ENCODE measurements at regions of chr17 and their contacts with region 1.

Region 1: DNA sequence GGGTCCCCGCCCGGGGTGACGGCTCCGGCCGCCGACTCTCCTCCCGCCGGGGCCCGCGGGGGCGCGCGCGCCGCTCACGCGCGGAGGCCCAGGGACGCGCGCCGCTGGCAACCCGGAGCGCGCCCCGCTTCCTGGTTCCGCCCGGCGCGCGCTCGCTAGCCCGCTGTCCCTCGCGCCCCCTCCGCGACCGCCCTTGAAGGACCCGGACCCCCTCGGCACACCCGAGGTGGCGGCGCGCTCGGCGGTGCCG is at the start of gene STAT5B:
- DNase-seq: peak in 8 of 10 donors; percentile 46 to 95 (median 70)

Region 2: DNA sequence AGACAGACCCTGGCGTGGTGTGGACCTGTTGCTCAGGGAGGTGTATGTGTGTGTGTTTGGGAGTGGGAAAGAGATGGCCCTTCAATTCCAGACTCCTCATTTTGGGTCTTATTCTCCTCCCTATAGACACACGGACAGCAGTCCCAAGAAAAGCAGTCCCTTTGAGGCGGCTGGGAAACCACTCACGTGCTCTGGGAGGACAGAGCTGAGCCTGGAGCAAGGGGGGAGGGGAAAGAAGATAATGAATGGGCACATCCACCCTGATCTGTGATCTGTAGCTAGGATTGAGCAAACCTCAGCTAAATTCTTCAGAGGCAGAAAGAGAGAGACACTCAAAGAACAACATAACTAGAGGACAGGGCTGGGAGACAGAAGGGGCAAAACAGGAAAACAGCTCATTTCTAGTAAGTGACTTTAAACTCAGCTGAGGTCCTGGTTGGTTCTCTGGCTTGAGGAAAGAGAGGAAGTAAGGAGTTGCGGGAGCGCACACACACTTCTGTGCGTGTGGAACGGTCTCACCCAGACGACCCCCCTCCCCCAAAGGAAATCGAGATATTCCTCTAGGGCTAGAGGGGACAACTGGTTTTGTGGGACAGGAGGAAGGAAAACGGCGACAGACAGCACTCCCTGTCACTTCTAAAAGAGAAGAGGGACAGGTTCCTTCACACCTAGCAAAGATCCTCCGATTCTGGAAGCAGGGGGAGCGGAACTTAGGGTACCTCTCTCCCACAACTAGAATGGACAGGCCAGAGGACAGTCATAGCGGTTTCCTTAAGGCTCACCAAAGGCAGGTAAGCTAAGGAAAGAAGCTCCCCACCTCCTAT is 122.2 kb before region 1 on chr17:
- intact Hi-C with region 1: no loop called
- DNase-seq: peak in 1 of 10 donors; percentile 6

Region 3: GRCh38 chr17:42183741-42184711 is 92.3 kb before region 1 on chr17:
- intact Hi-C with region 1: loop called (anchors 5 kb)
- DNase-seq: peak; percentile 48 to 97 (median 70)

Region 4: DNA sequence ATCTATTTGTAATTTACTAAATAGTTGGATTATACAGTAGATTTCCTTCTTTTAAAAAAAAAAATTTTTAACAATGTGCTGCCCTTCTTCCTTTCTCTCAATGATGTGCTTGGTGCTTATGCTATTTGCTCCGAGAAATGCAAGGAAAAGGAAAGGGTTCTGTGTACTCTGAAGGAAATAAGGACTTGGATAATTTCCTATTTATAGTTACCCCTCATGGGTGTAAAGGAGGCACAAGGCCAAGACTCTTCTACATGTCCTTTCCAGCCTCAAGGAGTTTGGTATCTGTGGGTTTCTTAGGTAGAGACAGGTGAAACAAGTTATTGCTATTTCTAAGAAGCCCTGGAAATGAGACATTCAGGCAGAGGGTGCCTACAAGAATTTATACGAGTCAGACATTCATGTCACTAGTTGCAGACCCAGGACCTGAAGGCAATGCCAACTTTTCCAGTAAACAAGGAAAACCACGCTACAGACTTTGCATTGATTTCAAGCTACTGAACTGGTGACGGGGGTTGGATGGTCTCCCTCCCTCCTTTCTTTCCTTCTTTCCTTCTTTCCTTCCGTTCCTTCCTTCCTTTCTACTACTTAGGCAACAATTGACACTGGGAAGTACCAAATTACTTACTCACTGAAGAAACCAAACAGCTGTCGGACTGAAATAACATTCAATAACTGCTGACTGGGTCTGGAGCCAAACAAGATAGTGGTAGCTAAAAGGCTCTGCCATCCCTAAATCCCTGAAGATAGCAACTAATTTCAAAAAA is 48.3 kb before region 1 on chr17:
- intact Hi-C with region 1: no loop called
- DNase-seq: no peak